ENCODE measurements at regions of chr15 and their contacts with region 1.

Region 1: DNA sequence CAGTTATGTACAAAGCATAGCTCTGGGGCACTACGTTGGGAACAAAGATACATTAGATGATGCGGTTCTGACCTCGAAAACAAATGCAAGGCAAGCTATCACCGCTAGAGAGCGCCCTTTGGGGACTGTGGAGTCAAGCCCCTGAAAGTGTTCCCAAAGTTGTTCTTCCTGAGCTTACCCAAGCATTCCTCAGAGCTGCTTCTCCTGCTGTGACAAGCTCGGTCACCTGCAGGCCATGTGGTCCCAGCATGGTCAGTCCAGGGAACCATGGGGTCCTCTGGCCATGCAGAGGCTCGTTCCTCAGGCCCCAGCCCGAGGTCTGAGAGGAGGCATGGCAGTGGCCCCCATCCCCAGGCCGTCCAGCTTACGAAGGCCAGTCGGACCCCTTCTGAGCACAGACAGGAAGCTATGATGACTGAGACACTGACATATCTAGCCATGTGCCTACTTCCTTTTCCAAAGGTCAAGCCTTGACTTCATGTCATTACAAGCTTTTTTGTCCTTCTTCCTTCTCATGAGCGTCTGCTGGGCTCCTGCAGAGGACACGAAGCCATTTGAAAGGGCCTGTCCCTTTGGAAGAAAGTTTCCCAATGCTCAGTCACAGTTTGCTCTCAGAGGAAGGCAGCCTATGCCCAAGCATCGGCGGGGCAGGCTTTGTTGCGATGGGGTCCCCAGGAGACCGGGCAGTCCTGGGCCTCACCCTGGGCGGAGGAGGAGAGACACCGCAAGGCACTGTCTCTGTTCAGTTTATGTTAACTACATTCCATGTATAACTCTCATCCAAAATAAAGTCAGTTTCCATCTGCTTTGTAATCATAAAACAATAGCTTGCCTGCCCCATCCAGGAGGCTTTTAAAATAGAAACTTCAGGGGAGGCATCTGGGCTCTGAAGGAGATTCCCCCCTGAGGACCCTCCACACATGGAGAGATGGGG is 79.3 kb downstream of the ATP10A start:
- DNase-seq: peak; percentile 55
- ATAC-seq: peak; percentile 33
- H3K4me3 Mint-ChIP-seq: no peak overlapping the region
- H3K27ac Mint-ChIP-seq: peak overlapping the region; percentile 29
- H3K4me1 Mint-ChIP-seq: peaks cover 33% of the 10 kb centered on the region
- H3K27me3 Mint-ChIP-seq: no peaks in the 10 kb centered on the region

Region 2: GRCh38 chr15:25691544-25692430 is 92.1 kb before region 1 on chr15:
- CTCF ChIA-PET with region 1: no interaction called
- POLR2A ChIA-PET with region 1: no interaction called
- DNase-seq: no peak
- ATAC-seq: no peak
- H3K4me3 Mint-ChIP-seq: no peak overlapping the region
- H3K27ac Mint-ChIP-seq: no peak overlapping the region
- H3K4me1 Mint-ChIP-seq: no peaks in the 10 kb centered on the region
- H3K27me3 Mint-ChIP-seq: no peaks in the 10 kb centered on the region

Region 3: DNA sequence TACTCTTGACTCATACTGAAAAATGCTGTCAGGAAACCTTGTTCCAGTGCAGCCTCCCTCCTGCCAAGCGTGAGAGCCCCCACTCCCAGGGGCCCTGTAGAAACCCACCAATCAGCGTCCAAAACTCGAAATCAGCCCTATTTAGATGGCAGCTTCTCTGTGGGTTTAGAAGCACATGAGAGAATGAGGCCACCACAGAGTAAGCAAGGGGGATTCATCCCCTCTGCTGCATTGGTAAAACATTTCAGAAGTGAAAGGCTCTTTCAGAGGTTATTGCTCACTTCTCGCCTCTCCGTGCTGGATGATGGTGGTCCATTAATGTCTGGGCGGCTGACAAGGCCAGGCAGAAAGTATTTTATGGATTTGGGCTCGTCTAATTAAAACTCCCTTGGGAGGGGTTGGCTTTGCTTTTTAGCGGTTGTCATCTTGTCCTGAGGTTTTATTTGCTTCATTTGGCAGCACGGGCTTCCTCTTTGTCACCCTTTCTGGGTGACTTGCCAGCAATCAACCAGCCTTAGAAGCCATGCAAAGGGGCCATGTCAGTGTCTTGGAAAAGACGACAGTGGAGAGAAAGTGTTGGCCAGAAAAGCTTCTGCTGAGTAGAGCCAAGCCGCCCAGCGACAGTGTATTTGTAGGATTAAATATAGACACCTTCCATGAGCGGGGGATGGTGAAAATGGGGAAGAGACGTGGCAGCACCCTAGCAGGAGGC is 66.3 kb before region 1 on chr15:
- CTCF ChIA-PET with region 1: no interaction called
- POLR2A ChIA-PET with region 1: no interaction called
- DNase-seq: no peak
- ATAC-seq: no peak
- H3K4me3 Mint-ChIP-seq: no peak overlapping the region
- H3K27ac Mint-ChIP-seq: no peak overlapping the region
- H3K4me1 Mint-ChIP-seq: no peaks in the 10 kb centered on the region
- H3K27me3 Mint-ChIP-seq: no peaks in the 10 kb centered on the region

Region 4: GRCh38 chr15:25863111-25863967 is 79.5 kb after region 1 on chr15 and contains the start of gene ATP10A:
- CTCF ChIA-PET with region 1: interaction called, 12 read pairs
- POLR2A ChIA-PET with region 1: interaction called, 6 read pairs
- DNase-seq: peak; percentile 69
- ATAC-seq: peak; percentile 30
- H3K4me3 Mint-ChIP-seq: peak within 1 kb of the TSS; percentile 96
- H3K27ac Mint-ChIP-seq: peak within 1 kb of the TSS; percentile 95
- H3K4me1 Mint-ChIP-seq: peaks cover 40% of the 10 kb centered on the region
- H3K27me3 Mint-ChIP-seq: peaks cover 10% of the 10 kb centered on the region
- total RNA-seq, gene ATP10A: 53.8 to 58.9 TPM

Region 5: GRCh38 chr15:25933456-25934158 is 149.7 kb after region 1 on chr15:
- CTCF ChIA-PET with region 1: interaction called, 30 read pairs
- POLR2A ChIA-PET with region 1: interaction called, 3 read pairs
- DNase-seq: peak; percentile 82
- ATAC-seq: peak; percentile 100
- H3K4me3 Mint-ChIP-seq: peak overlapping the region; percentile 81
- H3K27ac Mint-ChIP-seq: peak overlapping the region; percentile 83
- H3K4me1 Mint-ChIP-seq: peaks cover 8% of the 10 kb centered on the region
- H3K27me3 Mint-ChIP-seq: peaks cover 3% of the 10 kb centered on the region